ENCODE measurements at regions of chr5 and their contacts with region 1.

Region 1: GRCh38 chr5:178120868-178121357 is 7.6 kb downstream of the N4BP3 start:
- DNase-seq: peak; percentile 70 to 86
- ATAC-seq: peak; percentile 77 to 92
- H3K4me3 ChIP-seq: no peak overlapping the region
- H3K27ac ChIP-seq: no peak overlapping the region
- H3K4me1 ChIP-seq: no peaks in the 10 kb centered on the region
- CTCF ChIP-seq: peak; percentile 41
- EP300 ChIP-seq: no peak
- POLR2A ChIP-seq: no peak
- RAD21 ChIP-seq: no peak

Region 2: DNA sequence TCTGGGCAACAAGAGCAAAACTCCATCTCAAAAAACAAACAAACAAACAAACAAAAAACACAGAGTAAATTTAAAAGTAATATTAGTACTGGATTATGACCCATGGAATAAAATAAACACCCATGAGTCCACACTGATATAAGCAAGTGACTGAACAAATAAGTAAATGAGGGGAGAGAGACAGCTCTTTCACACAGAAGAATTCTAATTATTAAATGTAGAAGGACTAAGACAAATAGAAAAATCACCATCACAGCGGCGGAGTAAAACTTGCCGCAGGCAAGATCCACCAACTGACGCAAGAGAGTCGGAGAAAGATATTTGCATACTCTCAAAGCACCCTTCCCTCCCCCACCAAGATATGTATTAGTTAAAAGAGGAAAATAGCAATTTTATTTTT is 22.3 kb before region 1 on chr5:
- CTCF ChIA-PET with region 1: interaction called, 11 read pairs
- POLR2A ChIA-PET with region 1: no interaction called
- DNase-seq: no peak
- ATAC-seq: no peak
- H3K4me3 ChIP-seq: no peak overlapping the region
- H3K27ac ChIP-seq: no peak overlapping the region
- H3K4me1 ChIP-seq: no peaks in the 10 kb centered on the region
- CTCF ChIP-seq: no peak
- EP300 ChIP-seq: no peak
- POLR2A ChIP-seq: no peak
- RAD21 ChIP-seq: no peak

Region 3: GRCh38 chr5:178137991-178138390 is 17.1 kb after region 1 on chr5:
- CTCF ChIA-PET with region 1: interaction called, 10 read pairs
- POLR2A ChIA-PET with region 1: no interaction called
- DNase-seq: no peak
- ATAC-seq: peak; percentile 11 to 14; a peak in 1 of 6 replicates
- H3K4me3 ChIP-seq: no peak overlapping the region
- H3K27ac ChIP-seq: no peak overlapping the region
- H3K4me1 ChIP-seq: no peaks in the 10 kb centered on the region
- CTCF ChIP-seq: no peak
- EP300 ChIP-seq: no peak
- POLR2A ChIP-seq: no peak
- RAD21 ChIP-seq: no peak

Region 4: DNA sequence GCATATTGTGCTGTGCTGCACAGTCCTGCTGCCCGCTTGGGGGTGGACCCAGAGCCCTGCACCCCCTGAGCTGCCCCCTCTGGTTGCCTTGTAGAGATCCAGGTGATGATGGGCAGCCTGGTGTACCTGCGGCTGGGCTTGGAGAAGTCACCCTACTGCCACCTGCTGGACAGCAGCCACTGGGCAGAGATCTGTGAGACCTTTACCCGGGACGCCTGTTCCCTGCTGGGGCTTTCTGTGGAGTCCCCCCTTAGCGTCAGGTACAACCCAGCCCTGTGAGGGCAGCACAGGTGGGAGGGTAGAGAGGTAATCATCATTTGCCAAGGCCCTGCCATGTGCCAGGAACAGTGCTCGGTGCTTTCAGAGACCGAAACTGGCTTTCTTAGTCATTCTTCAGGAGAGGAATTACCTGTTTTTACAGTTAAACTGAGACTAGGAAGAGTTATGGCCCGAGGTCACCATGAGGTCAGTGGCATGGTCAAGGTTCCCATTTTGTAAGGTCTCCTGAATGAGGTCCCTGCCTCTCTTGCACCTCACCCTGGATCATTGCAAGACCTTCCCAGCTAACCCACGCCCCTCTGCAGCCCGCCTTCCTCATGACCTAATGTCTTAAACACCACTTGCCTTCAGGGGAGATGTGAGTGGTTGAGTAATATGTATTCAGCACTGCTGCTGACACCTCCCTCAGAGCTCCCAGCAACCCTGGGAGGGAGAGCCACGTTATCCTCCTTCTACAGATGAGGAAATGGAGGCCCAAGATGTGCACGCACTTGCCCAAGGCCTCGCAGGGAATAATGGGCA is 25.3 kb after region 1 on chr5:
- CTCF ChIA-PET with region 1: interaction called, 10 read pairs
- POLR2A ChIA-PET with region 1: no interaction called
- DNase-seq: peak; percentile 75 to 82
- ATAC-seq: peak; percentile 86 to 90
- H3K4me3 ChIP-seq: no peak overlapping the region
- H3K27ac ChIP-seq: no peak overlapping the region
- H3K4me1 ChIP-seq: peaks cover 8% of the 10 kb centered on the region; the same call in 2 of the 3 replicates
- CTCF ChIP-seq: peak; percentile 83
- EP300 ChIP-seq: no peak
- POLR2A ChIP-seq: no peak
- RAD21 ChIP-seq: peak; percentile 56 to 63

Region 5: DNA sequence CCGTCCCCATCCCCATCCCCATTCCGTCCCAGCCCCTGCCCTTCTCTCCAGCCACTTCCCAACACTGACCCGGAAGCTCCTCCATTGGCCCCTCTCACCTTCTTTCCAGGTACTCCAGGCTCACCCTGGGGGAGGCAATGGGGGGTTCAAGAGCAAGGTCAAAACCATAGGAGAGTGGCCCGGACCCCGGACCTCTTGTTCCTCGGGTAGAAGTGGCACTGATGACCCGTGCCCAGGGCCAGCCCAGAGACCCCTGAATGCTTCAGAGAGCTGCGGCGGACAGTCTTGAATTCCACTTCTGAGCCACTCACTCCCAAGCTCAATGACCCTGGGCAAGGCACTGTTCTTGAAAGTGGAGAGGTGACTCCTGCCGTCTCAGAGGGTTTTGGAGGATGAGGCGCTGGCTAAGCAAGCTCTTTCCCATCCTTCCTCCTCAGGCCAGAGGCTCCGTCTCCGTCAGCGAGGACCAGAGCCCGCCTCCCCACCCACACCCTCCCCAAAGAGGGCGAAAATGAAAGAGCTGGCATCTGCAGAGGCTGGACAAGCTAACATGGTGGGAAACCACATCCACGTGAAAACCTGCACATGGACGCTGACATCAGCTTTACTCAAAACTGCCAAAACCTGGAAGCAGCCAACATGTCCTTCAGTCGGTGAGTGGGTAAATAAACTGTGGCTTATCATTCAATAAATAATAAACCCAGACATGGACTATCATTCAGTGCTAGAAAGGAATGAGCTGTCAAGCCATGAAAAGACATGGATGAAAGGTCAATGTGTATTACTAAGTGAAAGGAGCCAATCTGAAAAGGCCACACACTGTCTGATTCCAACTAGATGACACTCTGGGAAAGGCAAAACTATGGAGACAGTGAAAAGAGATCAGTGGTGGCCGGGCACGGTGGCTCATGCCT is 139.0 kb after region 1 on chr5:
- CTCF ChIA-PET with region 1: no interaction called
- POLR2A ChIA-PET with region 1: no interaction called
- DNase-seq: no peak
- ATAC-seq: no peak
- H3K4me3 ChIP-seq: no peak overlapping the region
- H3K27ac ChIP-seq: no peak overlapping the region
- H3K4me1 ChIP-seq: no peaks in the 10 kb centered on the region
- CTCF ChIP-seq: no peak
- EP300 ChIP-seq: no peak
- POLR2A ChIP-seq: no peak
- RAD21 ChIP-seq: no peak

Region 6: GRCh38 chr5:178818094-178818493 is 697.2 kb after region 1 on chr5:
- CTCF ChIA-PET with region 1: no interaction called
- POLR2A ChIA-PET with region 1: no interaction called
- DNase-seq: no peak
- ATAC-seq: no peak
- H3K4me3 ChIP-seq: no peak overlapping the region
- H3K27ac ChIP-seq: no peak overlapping the region
- H3K4me1 ChIP-seq: no peaks in the 10 kb centered on the region
- CTCF ChIP-seq: no peak
- EP300 ChIP-seq: no peak
- POLR2A ChIP-seq: no peak
- RAD21 ChIP-seq: no peak